H1 (cell line): ENCODE measurements at regions of chr6 and their contacts with region 1.

Region 1: DNA sequence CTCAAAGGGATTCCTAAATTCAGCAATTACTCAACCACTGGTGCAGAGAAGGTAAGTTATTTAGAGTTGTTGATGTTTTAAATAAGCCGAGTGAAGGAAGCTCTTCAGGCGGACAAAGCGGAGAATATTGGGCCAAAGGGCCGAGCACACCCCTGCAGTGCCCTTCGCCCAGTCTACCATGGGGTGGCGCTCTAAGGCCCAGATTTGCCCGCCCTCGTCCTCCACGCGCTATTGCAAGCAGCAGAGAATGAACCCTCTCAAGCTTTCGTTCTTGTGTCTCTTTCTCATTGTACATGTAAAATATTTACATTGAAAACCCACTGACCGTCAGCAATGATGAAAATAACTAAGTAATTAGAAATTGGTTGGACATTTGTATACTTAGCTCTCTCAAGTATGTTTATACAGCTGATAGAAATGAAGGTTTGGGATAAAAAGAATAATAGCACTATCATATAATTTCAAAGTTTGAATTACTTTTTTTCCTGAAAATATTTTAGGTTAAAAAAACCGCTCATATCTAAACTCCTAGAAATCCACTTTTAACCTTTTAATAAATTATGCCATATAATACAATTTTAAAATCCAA is 195.0 kb upstream of the CEP162 start:
- DNase-seq: peak; percentile 41 to 92
- H3K4me3 ChIP-seq: no peak overlapping the region
- H3K27ac ChIP-seq: no peak overlapping the region
- H3K4me1 ChIP-seq: peaks cover 0 to 7% (median 2%) of the 10 kb centered on the region in 4 experiments; a peak in 2 of 7 replicates
- H3K27me3 ChIP-seq: no peaks in the 10 kb centered on the region
- CTCF ChIP-seq: peak; percentile 91 to 98 (median 95)
- EP300 ChIP-seq: no peak
- POLR2A ChIP-seq: no peak
- RAD21 ChIP-seq: peak; percentile 94 to 96

Region 2: GRCh38 chr6:84403545-84403944 is 18.9 kb before region 1 on chr6:
- CTCF ChIA-PET with region 1: interaction called, 12 read pairs
- POLR2A ChIA-PET with region 1: no interaction called
- DNase-seq: no peak
- H3K4me3 ChIP-seq: no peak overlapping the region
- H3K27ac ChIP-seq: no peak overlapping the region
- H3K4me1 ChIP-seq: no peaks in the 10 kb centered on the region
- H3K27me3 ChIP-seq: no peaks in the 10 kb centered on the region
- CTCF ChIP-seq: no peak
- EP300 ChIP-seq: no peak
- POLR2A ChIP-seq: no peak
- RAD21 ChIP-seq: no peak

Region 3: DNA sequence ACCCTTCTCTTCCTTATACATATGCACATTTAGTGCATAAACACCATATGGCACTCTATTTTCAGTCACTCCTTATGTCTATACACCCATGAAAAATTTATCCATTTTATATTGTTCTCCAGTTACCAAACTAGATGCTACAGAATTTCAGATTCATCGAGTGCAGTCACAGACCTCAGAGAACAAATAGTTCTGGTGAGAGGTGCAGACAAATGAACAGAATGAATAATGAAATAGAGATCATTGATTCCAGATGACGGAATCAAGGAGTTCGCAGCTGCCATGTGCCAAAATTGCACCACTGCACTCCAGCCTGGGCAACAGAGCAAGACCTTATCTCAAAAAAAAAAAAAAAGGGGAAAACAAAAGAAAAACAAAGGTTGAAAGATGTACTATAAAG is 19.7 kb after region 1 on chr6:
- CTCF ChIA-PET with region 1: interaction called, 13 read pairs
- POLR2A ChIA-PET with region 1: no interaction called
- DNase-seq: no peak
- H3K4me3 ChIP-seq: no peak overlapping the region
- H3K27ac ChIP-seq: no peak overlapping the region
- H3K4me1 ChIP-seq: no peaks in the 10 kb centered on the region
- H3K27me3 ChIP-seq: peaks cover 0 to 2% (median 0%) of the 10 kb centered on the region in 4 experiments; a peak in 1 of 7 replicates
- CTCF ChIP-seq: no peak
- EP300 ChIP-seq: no peak
- POLR2A ChIP-seq: no peak
- RAD21 ChIP-seq: no peak

Region 4: DNA sequence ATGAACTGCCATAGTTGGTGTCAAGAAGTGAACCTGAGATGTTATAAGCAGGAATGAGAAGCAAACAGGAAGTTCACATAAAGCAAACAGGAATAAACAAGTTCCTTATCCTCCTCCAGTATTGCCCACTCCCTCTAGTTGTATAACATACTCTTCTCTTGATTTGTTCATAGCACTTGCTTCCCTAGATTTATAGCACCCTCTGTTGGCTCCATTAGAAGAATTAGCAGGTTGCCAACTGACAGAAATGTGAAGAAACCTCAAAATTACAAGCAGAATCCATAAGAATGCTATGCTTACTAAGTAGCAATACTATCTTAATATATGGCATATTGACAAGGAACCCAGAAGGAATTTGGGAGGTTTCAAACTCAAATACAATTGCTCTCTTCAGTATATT is 146.5 kb after region 1 on chr6:
- CTCF ChIA-PET with region 1: interaction called, 17 read pairs
- POLR2A ChIA-PET with region 1: no interaction called
- DNase-seq: no peak
- H3K4me3 ChIP-seq: no peak overlapping the region
- H3K27ac ChIP-seq: no peak overlapping the region
- H3K4me1 ChIP-seq: no peaks in the 10 kb centered on the region; a peak in 1 of 7 replicates
- H3K27me3 ChIP-seq: no peaks in the 10 kb centered on the region
- CTCF ChIP-seq: peak in 2 of 3 experiments; percentile 42 to 43; a peak in 2 of 4 replicates
- EP300 ChIP-seq: no peak
- POLR2A ChIP-seq: no peak
- RAD21 ChIP-seq: peak; percentile 68 to 75

Region 5: DNA sequence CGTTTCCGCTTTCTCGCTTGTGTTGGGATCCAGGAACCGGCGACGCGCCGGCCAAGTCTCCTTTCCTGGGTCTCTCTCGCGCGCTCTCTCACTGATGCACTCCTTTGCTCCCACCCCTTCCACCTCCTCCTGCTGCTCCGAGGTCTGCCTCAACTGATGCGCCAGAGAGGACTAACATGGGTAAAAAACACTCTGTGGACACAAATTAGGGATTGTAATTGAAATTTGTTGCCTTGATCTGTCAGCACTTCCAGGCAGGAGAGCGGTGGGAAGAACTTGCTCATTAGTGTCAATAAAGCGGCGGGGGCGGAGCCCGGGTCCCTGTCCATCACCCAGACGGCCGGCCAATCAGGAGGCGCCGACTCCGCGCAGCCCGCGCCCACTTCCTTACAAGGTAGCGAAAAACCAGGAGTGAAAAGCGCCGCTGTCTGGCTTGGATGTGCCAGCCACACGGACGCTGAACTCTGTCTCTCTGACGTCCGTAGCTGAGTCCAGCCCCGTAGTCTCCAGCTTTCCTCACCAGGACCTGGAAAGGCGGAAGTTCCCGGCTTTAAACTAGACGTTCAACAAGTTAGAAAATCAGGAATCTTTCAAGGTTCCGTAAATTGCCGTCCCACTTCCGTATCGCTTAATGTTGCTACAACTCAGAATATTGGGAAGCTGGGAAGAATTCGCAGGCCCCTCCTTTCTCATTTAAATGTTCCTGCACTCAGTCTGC is 342.0 kb after region 1 on chr6 and contains the start of gene TBX18:
- CTCF ChIA-PET with region 1: interaction called, 10 read pairs
- POLR2A ChIA-PET with region 1: interaction called, 4 read pairs
- DNase-seq: peak; percentile 83 to 96
- H3K4me3 ChIP-seq: peak within 1 kb of the TSS; percentile 49 to 74 (median 64)
- H3K27ac ChIP-seq: no peak within 1 kb of the TSS
- H3K4me1 ChIP-seq: peaks cover 0 to 24% (median 13%) of the 10 kb centered on the region in 4 experiments; a peak in 5 of 7 replicates
- H3K27me3 ChIP-seq: peaks cover 60 to 92% (median 81%) of the 10 kb centered on the region in 4 experiments
- CTCF ChIP-seq: no peak
- EP300 ChIP-seq: no peak
- POLR2A ChIP-seq: no peak
- RAD21 ChIP-seq: peak in 1 of 2 experiments; percentile 14; a peak in 2 of 4 replicates
- total RNA-seq, gene TBX18: not detected in 2 replicates

Region 6: DNA sequence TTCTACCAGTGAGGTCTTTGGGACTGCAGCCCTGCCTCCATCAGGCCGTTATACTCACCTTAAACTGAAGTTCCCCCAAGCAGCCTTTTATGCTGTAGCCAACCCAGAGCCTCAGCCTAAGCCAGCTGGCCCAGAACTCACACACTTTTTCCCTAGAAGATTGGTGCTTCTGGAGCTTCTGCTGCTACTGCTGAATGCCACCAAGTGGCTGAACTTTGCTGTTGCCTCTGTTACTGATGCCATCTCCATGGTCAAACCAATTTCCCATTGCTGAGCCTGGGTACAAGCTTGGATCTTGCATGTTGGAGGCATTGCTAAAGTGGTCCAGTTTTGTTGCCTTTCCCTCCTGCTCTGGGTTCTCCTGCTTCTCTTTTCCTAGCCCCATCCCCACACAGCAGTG is 356.9 kb after region 1 on chr6:
- CTCF ChIA-PET with region 1: interaction called, 13 read pairs
- POLR2A ChIA-PET with region 1: no interaction called
- DNase-seq: no peak
- H3K4me3 ChIP-seq: no peak overlapping the region
- H3K27ac ChIP-seq: no peak overlapping the region
- H3K4me1 ChIP-seq: peaks cover 0 to 2% (median 0%) of the 10 kb centered on the region in 4 experiments; a peak in 2 of 7 replicates
- H3K27me3 ChIP-seq: peaks cover 10 to 29% (median 20%) of the 10 kb centered on the region in 4 experiments
- CTCF ChIP-seq: peak in 2 of 3 experiments; percentile 15 to 42; a peak in 3 of 4 replicates
- EP300 ChIP-seq: no peak
- POLR2A ChIP-seq: no peak
- RAD21 ChIP-seq: peak; percentile 29 to 48